PC-3 (cell line): ENCODE measurements at regions of chr19 and their contacts with region 1.

Region 1: GRCh38 chr19:12757544-12758274 is 6.1 kb downstream of the BEST2 start:
- DNase-seq: peak; percentile 90
- ATAC-seq: peak; percentile 87
- H3K4me3 ChIP-seq: peak overlapping the region; percentile 53
- H3K27ac ChIP-seq: no peak overlapping the region
- H3K4me1 ChIP-seq: no peaks in the 10 kb centered on the region
- H3K27me3 ChIP-seq: no peaks in the 10 kb centered on the region
- CTCF ChIP-seq: peak; percentile 97

Region 2: GRCh38 chr19:12696366-12697335 is 61.1 kb before region 1 on chr19 and contains the start of gene FBXW9:
- CTCF ChIA-PET with region 1: no interaction called
- POLR2A ChIA-PET with region 1: no interaction called
- intact Hi-C with region 1: no loop called
- DNase-seq: peak; percentile 98
- ATAC-seq: peak; percentile 85
- H3K4me3 ChIP-seq: peak within 1 kb of the TSS; percentile 83
- H3K27ac ChIP-seq: peak within 1 kb of the TSS; percentile 42
- H3K4me1 ChIP-seq: peaks cover 15% of the 10 kb centered on the region
- H3K27me3 ChIP-seq: no peaks in the 10 kb centered on the region
- CTCF ChIP-seq: no peak
- total RNA-seq, gene FBXW9: 27.5 and 34.6 TPM in 2 replicates

Region 3: GRCh38 chr19:12716861-12717260 is 40.8 kb before region 1 on chr19:
- CTCF ChIA-PET with region 1: interaction called, 11 read pairs
- POLR2A ChIA-PET with region 1: interaction called, 5 read pairs
- intact Hi-C with region 1: loop called (anchors 1 kb)
- DNase-seq: peak; percentile 79
- ATAC-seq: peak; percentile 44
- H3K4me3 ChIP-seq: no peak overlapping the region
- H3K27ac ChIP-seq: no peak overlapping the region
- H3K4me1 ChIP-seq: peaks cover 24% of the 10 kb centered on the region
- H3K27me3 ChIP-seq: no peaks in the 10 kb centered on the region
- CTCF ChIP-seq: peak; percentile 75

Region 4: GRCh38 chr19:12791238-12792021 is 33.7 kb after region 1 on chr19 and contains the start of gene JUNB:
- CTCF ChIA-PET with region 1: interaction called, 5 read pairs
- POLR2A ChIA-PET with region 1: interaction called, 3 read pairs
- intact Hi-C with region 1: loop called (anchors 1 kb)
- DNase-seq: peak; percentile 99
- ATAC-seq: peak; percentile 43
- H3K4me3 ChIP-seq: peak within 1 kb of the TSS; percentile 90
- H3K27ac ChIP-seq: peak within 1 kb of the TSS; percentile 95
- H3K4me1 ChIP-seq: peaks cover 51% of the 10 kb centered on the region
- H3K27me3 ChIP-seq: no peaks in the 10 kb centered on the region
- CTCF ChIP-seq: no peak
- total RNA-seq, gene JUNB: 343 and 391 TPM in 2 replicates

Region 5: GRCh38 chr19:12833738-12834565 is 76.2 kb after region 1 on chr19:
- CTCF ChIA-PET with region 1: no interaction called
- POLR2A ChIA-PET with region 1: no interaction called
- intact Hi-C with region 1: no loop called
- DNase-seq: peak; percentile 39
- ATAC-seq: peak; percentile 7; the same call in 1 of the 2 replicates
- H3K4me3 ChIP-seq: peak overlapping the region; percentile 71
- H3K27ac ChIP-seq: no peak overlapping the region
- H3K4me1 ChIP-seq: peaks cover 12% of the 10 kb centered on the region
- H3K27me3 ChIP-seq: peaks cover 11% of the 10 kb centered on the region
- CTCF ChIP-seq: no peak